BJ (cell line): ENCODE measurements at regions of chr3 and their contacts with region 1.

Region 1: GRCh38 chr3:54970895-54971294 is 43.0 kb upstream of the LRTM1 start:
- DNase-seq: no peak
- H3K4me3 ChIP-seq: no peak overlapping the region
- H3K27me3 ChIP-seq: no peaks in the 10 kb centered on the region
- CTCF ChIP-seq: no peak

Region 2: GRCh38 chr3:54931182-54931581 is 39.7 kb before region 1 on chr3:
- CTCF ChIA-PET with region 1: no interaction called
- POLR2A ChIA-PET with region 1: no interaction called
- DNase-seq: no peak
- H3K4me3 ChIP-seq: no peak overlapping the region
- H3K27me3 ChIP-seq: no peaks in the 10 kb centered on the region
- CTCF ChIP-seq: no peak

Region 3: GRCh38 chr3:55030938-55031337 is 60.0 kb after region 1 on chr3:
- CTCF ChIA-PET with region 1: no interaction called
- POLR2A ChIA-PET with region 1: interaction called, 11 read pairs
- DNase-seq: no peak
- H3K4me3 ChIP-seq: no peak overlapping the region
- H3K27me3 ChIP-seq: no peaks in the 10 kb centered on the region; the same call in 1 of the 2 replicates
- CTCF ChIP-seq: no peak

Region 4: GRCh38 chr3:55042591-55042990 is 71.7 kb after region 1 on chr3:
- CTCF ChIA-PET with region 1: no interaction called
- POLR2A ChIA-PET with region 1: no interaction called
- DNase-seq: no peak
- H3K4me3 ChIP-seq: no peak overlapping the region
- H3K27me3 ChIP-seq: no peaks in the 10 kb centered on the region
- CTCF ChIP-seq: no peak

Region 5: GRCh38 chr3:56133423-56133822 is 1162.5 kb after region 1 on chr3:
- CTCF ChIA-PET with region 1: no interaction called
- POLR2A ChIA-PET with region 1: interaction called, 10 read pairs
- DNase-seq: no peak
- H3K4me3 ChIP-seq: no peak overlapping the region
- H3K27me3 ChIP-seq: no peaks in the 10 kb centered on the region
- CTCF ChIP-seq: no peak